ENCODE measurements at regions of chr1 and their contacts with region 1.

Region 1: DNA sequence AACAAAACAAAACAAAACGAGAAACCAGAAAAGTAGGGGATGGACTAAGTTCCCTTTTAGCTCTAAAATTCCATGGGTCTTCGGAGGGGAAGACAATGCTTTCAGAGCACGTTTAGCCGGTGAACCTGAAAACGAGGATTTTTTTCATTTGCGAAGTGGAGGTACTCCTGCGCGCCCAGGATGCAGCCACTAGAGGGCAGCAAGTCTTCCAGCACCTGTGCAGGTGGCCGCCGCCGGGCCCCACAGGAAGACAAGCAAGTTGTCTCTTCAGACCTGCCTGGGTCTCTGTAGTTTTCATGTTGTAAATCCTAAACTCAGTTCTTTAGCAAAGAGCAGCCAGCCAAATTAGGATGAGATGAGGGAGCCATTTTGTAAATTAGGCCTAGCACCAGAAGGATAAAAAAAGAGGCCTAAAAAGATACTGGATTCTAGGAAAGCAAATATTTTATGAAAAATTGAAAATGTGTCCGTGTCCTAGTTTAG is 17.7 kb upstream of the SNX27 start:
- DNase-seq: peak; percentile 80
- H3K4me3 ChIP-seq: peak overlapping the region in 1 of 2 experiments; percentile 28; a peak in 1 of 4 replicates
- H3K27ac ChIP-seq: no peak overlapping the region
- H3K4me1 ChIP-seq: peaks cover 0 to 6% of the 10 kb centered on the region in 2 experiments; a peak in 1 of 4 replicates
- H3K27me3 ChIP-seq: no peaks in the 10 kb centered on the region
- CTCF ChIP-seq: peak; percentile 97
- EP300 ChIP-seq: no peak
- RAD21 ChIP-seq: peak; percentile 78

Region 2: GRCh38 chr1:151534665-151535278 is 59.4 kb before region 1 on chr1:
- CTCF ChIA-PET with region 1: interaction called, 28 read pairs
- POLR2A ChIA-PET with region 1: interaction called, 4 read pairs
- DNase-seq: peak; percentile 81
- H3K4me3 ChIP-seq: no peak overlapping the region; a peak in 1 of 4 replicates
- H3K27ac ChIP-seq: no peak overlapping the region
- H3K4me1 ChIP-seq: peaks cover 10 to 28% of the 10 kb centered on the region in 2 experiments; a peak in 3 of 4 replicates
- H3K27me3 ChIP-seq: no peaks in the 10 kb centered on the region
- CTCF ChIP-seq: peak; percentile 97
- EP300 ChIP-seq: no peak
- RAD21 ChIP-seq: peak; percentile 85

Region 3: GRCh38 chr1:151570819-151571218 is 23.4 kb before region 1 on chr1:
- CTCF ChIA-PET with region 1: interaction called, 10 read pairs
- POLR2A ChIA-PET with region 1: no interaction called
- DNase-seq: no peak
- H3K4me3 ChIP-seq: no peak overlapping the region
- H3K27ac ChIP-seq: no peak overlapping the region
- H3K4me1 ChIP-seq: peaks cover 0 to 8% of the 10 kb centered on the region in 2 experiments; a peak in 1 of 4 replicates
- H3K27me3 ChIP-seq: no peaks in the 10 kb centered on the region
- CTCF ChIP-seq: no peak
- EP300 ChIP-seq: no peak
- RAD21 ChIP-seq: no peak

Region 4: DNA sequence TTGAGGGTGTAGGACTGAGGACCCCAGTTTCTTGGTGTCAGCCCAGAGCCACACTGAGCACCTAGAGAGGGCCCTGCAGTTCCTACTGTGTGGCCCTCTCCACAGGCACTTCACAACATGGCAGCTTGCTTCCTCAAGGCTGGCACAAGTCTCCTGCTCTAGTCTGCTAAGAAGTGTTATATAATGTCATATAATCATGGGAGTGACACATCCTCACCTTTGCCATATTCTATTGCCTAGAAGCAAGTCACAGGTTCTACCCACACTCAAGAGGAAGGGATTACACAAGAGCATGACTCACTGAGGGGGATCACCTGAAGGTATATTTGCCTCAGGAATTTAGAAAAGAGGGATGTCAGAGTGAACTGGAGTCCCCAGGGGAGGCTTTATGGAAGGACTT is 12.2 kb after region 1 on chr1:
- CTCF ChIA-PET with region 1: interaction called, 22 read pairs
- POLR2A ChIA-PET with region 1: no interaction called
- DNase-seq: no peak
- H3K4me3 ChIP-seq: no peak overlapping the region
- H3K27ac ChIP-seq: no peak overlapping the region
- H3K4me1 ChIP-seq: peaks cover 0 to 3% of the 10 kb centered on the region in 2 experiments; a peak in 1 of 4 replicates
- H3K27me3 ChIP-seq: no peaks in the 10 kb centered on the region
- CTCF ChIP-seq: no peak
- EP300 ChIP-seq: no peak
- RAD21 ChIP-seq: no peak

Region 5: GRCh38 chr1:151686561-151686960 is 92.4 kb after region 1 on chr1:
- CTCF ChIA-PET with region 1: no interaction called
- POLR2A ChIA-PET with region 1: no interaction called
- DNase-seq: no peak
- H3K4me3 ChIP-seq: no peak overlapping the region
- H3K27ac ChIP-seq: no peak overlapping the region
- H3K4me1 ChIP-seq: peaks cover 0 to 3% of the 10 kb centered on the region in 2 experiments; a peak in 2 of 4 replicates
- H3K27me3 ChIP-seq: no peaks in the 10 kb centered on the region
- CTCF ChIP-seq: no peak
- EP300 ChIP-seq: no peak
- RAD21 ChIP-seq: no peak

Region 6: GRCh38 chr1:151720974-151721787 is 127.0 kb after region 1 on chr1 and contains the start of gene RIIAD1:
- CTCF ChIA-PET with region 1: interaction called, 17 read pairs
- POLR2A ChIA-PET with region 1: no interaction called
- DNase-seq: peak; percentile 93
- H3K4me3 ChIP-seq: peak within 1 kb of the TSS; percentile 59 to 73
- H3K27ac ChIP-seq: peak within 1 kb of the TSS in 1 of 2 experiments; percentile 44; a peak in 2 of 4 replicates
- H3K4me1 ChIP-seq: peaks cover 0 to 36% of the 10 kb centered on the region in 2 experiments; a peak in 3 of 4 replicates
- H3K27me3 ChIP-seq: peaks cover 21% of the 10 kb centered on the region
- CTCF ChIP-seq: peak; percentile 45
- EP300 ChIP-seq: no peak
- RAD21 ChIP-seq: peak; percentile 38
- polyA plus RNA-seq, gene RIIAD1: not detected in 2 replicates

Measured in SK-N-SH (cell line).